CD8-positive, alpha-beta T cell (primary cell): ENCODE measurements at regions of chr6 and their contacts with region 1.

Region 1: GRCh38 chr6:138931660-138932059 is 56.4 kb downstream of the REPS1 start:
- DNase-seq: no peak
- ATAC-seq: no peak
- H3K4me3 ChIP-seq: no peak overlapping the region
- H3K4me3 Mint-ChIP-seq: no peak overlapping the region
- H3K27ac ChIP-seq: no peak overlapping the region
- H3K27ac Mint-ChIP-seq: no peak overlapping the region
- H3K4me1 ChIP-seq: no peaks in the 10 kb centered on the region
- H3K4me1 Mint-ChIP-seq: peaks cover 7% of the 10 kb centered on the region
- H3K27me3 ChIP-seq: no peaks in the 10 kb centered on the region
- H3K27me3 Mint-ChIP-seq: no peaks in the 10 kb centered on the region
- CTCF ChIP-seq: no peak

Region 2: DNA sequence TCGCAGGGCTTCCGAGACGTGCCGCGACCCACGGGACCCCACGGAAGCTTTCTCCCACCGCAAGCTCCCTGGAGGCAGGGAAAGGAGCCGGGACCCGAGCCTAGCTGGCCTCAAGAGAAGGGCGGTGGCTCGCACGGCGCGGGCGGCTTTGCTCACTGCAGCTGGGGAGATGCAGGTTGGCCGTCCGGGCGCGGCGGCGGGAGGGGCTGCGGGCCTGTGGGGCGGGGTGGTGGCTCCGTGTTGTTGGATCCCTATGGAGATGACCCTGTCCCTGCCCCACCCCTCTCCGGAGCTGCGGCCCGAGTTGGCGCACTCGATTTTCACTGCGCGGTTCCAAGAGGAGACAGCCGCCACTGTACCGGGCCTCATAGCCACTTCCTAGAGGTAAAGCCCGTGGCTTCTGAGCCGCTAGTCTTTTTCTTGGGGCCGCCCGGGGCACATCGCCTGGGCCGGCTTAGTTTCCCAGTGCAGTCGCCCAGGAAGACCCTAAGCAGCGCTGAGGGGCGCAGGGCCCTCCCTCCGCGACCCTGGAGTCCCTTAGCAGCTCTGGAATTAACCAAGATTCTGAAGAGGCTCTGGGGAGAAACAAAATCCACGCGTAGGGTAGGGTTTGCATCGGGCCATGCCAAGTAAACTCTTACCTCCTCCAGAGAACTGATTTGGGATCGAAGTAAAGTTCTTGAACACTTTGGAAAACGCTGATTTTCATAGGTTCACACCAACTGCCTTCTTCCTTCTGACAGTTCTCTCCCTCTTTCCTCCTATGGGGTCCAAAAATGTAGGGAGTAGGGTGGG is 135.7 kb before region 1 on chr6 and contains the start of gene ECT2L:
- CTCF ChIA-PET with region 1: no interaction called
- POLR2A ChIA-PET with region 1: no interaction called
- intact Hi-C with region 1: no loop called
- DNase-seq: no peak
- ATAC-seq: no peak
- H3K4me3 ChIP-seq: no peak within 1 kb of the TSS
- H3K4me3 Mint-ChIP-seq: no peak within 1 kb of the TSS
- H3K27ac ChIP-seq: no peak within 1 kb of the TSS
- H3K27ac Mint-ChIP-seq: no peak within 1 kb of the TSS
- H3K4me1 ChIP-seq: no peaks in the 10 kb centered on the region
- H3K4me1 Mint-ChIP-seq: no peaks in the 10 kb centered on the region
- H3K27me3 ChIP-seq: no peaks in the 10 kb centered on the region
- H3K27me3 Mint-ChIP-seq: peaks cover 9% of the 10 kb centered on the region
- CTCF ChIP-seq: no peak
- total RNA-seq, gene ECT2L: not detected

Region 3: GRCh38 chr6:138882369-138883017 is 49.2 kb before region 1 on chr6:
- CTCF ChIA-PET with region 1: no interaction called
- POLR2A ChIA-PET with region 1: no interaction called
- intact Hi-C with region 1: no loop called
- DNase-seq: no peak
- ATAC-seq: no peak
- H3K4me3 ChIP-seq: no peak overlapping the region
- H3K4me3 Mint-ChIP-seq: no peak overlapping the region
- H3K27ac ChIP-seq: no peak overlapping the region
- H3K27ac Mint-ChIP-seq: no peak overlapping the region
- H3K4me1 ChIP-seq: no peaks in the 10 kb centered on the region
- H3K4me1 Mint-ChIP-seq: no peaks in the 10 kb centered on the region
- H3K27me3 ChIP-seq: no peaks in the 10 kb centered on the region
- H3K27me3 Mint-ChIP-seq: no peaks in the 10 kb centered on the region
- CTCF ChIP-seq: no peak

Region 4: DNA sequence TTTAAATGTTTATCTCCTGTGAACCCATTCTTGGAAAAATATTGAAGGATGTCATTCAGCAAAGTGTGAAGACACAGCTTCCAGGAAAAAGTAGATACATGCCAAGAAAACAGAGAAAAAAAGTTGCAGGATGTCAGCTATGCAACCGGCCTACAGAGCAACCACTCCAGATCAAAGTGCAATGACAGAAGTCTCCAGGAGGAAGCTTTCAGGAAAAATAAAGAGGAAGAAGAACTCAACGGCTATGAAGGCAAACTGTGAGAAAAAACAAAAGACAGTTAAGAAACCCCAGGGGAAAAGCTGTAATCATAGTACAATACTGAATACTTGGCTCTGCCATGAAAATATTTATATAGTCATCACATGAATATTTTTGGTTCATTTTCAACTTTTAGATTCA is 25.8 kb after region 1 on chr6:
- CTCF ChIA-PET with region 1: no interaction called
- POLR2A ChIA-PET with region 1: interaction called, 3 read pairs
- intact Hi-C with region 1: loop called in 1 of 2 experiments (anchors 2 kb)
- DNase-seq: no peak
- ATAC-seq: no peak
- H3K4me3 ChIP-seq: no peak overlapping the region
- H3K4me3 Mint-ChIP-seq: no peak overlapping the region
- H3K27ac ChIP-seq: no peak overlapping the region
- H3K27ac Mint-ChIP-seq: peak overlapping the region; percentile 25
- H3K4me1 ChIP-seq: peaks cover 26% of the 10 kb centered on the region
- H3K4me1 Mint-ChIP-seq: peaks cover 74% of the 10 kb centered on the region
- H3K27me3 ChIP-seq: no peaks in the 10 kb centered on the region
- H3K27me3 Mint-ChIP-seq: no peaks in the 10 kb centered on the region
- CTCF ChIP-seq: no peak

Region 5: DNA sequence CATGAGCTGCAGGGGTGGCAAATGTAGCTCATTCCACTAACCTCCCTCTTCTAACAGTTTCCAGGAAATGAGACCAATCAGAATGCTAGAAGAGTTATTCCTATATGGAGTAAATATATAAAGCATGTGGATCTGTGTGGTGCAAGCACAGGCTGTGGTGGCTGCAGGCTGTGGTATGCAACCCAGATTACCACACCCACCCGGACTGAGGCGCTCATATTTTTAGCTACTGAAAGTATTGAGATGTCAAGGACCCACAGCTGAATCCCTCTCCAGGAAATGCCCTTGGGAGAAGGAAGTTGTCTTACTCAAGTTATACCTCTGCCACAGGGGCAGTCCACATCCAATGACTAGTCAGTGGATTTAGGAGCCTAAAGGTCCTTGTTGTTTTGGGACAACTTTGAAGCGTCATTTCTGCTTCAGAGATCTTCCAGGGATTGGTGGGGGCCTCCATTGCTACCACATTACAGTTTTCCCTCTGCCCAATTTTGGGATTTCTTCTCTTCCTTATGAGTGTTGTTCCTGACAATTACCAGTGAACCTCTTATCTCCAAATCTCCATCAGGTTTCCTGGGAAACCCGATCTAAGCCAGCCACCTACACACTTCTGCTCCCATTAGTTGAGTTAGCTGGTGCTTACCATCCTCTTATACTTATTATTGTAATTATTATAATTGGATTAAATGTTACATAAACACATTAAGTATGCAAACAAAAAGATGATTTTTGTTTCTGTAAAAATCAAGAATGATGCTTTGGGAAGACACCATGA is 68.5 kb after region 1 on chr6:
- CTCF ChIA-PET with region 1: no interaction called
- POLR2A ChIA-PET with region 1: no interaction called
- intact Hi-C with region 1: no loop called
- DNase-seq: no peak
- ATAC-seq: no peak
- H3K4me3 ChIP-seq: no peak overlapping the region
- H3K4me3 Mint-ChIP-seq: no peak overlapping the region
- H3K27ac ChIP-seq: no peak overlapping the region
- H3K27ac Mint-ChIP-seq: no peak overlapping the region
- H3K4me1 ChIP-seq: no peaks in the 10 kb centered on the region
- H3K4me1 Mint-ChIP-seq: no peaks in the 10 kb centered on the region
- H3K27me3 ChIP-seq: no peaks in the 10 kb centered on the region
- H3K27me3 Mint-ChIP-seq: no peaks in the 10 kb centered on the region
- CTCF ChIP-seq: no peak